ENCODE measurements at regions of chr10 and their contacts with region 1.

Region 1: GRCh38 chr10:15439341-15439842 is 68.3 kb upstream of the FAM171A1 start:
- DNase-seq: peak; percentile 79 to 87
- ATAC-seq: peak; percentile 78
- H3K4me3 ChIP-seq: no peak overlapping the region
- H3K27ac ChIP-seq: peak overlapping the region; percentile 52 to 84
- H3K4me1 ChIP-seq: peaks cover 0 to 2% of the 10 kb centered on the region in 2 donors
- H3K27me3 ChIP-seq: no peaks in the 10 kb centered on the region

Region 2: GRCh38 chr10:15504101-15504840 is 64.9 kb after region 1 on chr10:
- intact Hi-C with region 1: no loop called
- DNase-seq: no peak
- ATAC-seq: peak; percentile 31
- H3K4me3 ChIP-seq: peak overlapping the region in 1 of 2 donors; percentile 24
- H3K27ac ChIP-seq: no peak overlapping the region
- H3K4me1 ChIP-seq: peaks cover 0 to 2% of the 10 kb centered on the region in 2 donors
- H3K27me3 ChIP-seq: no peaks in the 10 kb centered on the region

Region 3: DNA sequence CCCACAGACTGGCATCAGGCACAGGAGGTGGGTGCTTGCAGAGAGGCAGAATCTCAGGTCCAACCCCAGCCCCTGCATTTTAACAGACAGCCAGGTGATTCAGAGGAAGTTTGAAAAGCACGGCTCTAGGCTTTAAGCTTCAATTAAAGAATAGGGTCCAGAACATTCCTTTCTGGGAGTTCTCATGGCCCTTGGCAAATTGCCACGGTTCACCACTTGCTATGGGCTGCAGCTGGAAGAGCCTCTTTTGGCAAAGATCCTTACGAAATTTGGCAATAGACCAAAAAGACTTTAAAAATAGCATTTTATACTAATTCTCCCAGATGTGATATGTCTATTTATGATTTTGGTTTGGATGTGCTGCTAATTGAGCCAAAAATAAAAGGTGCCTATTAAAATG is 132.2 kb after region 1 on chr10:
- intact Hi-C with region 1: loop called in 1 of 2 experiments (anchors 5 kb)
- DNase-seq: peak in 1 of 2 donors; percentile 71
- ATAC-seq: no peak
- H3K4me3 ChIP-seq: no peak overlapping the region
- H3K27ac ChIP-seq: peak overlapping the region; percentile 69 to 90
- H3K4me1 ChIP-seq: peaks cover 3 to 7% of the 10 kb centered on the region in 2 donors
- H3K27me3 ChIP-seq: no peaks in the 10 kb centered on the region

Region 4: DNA sequence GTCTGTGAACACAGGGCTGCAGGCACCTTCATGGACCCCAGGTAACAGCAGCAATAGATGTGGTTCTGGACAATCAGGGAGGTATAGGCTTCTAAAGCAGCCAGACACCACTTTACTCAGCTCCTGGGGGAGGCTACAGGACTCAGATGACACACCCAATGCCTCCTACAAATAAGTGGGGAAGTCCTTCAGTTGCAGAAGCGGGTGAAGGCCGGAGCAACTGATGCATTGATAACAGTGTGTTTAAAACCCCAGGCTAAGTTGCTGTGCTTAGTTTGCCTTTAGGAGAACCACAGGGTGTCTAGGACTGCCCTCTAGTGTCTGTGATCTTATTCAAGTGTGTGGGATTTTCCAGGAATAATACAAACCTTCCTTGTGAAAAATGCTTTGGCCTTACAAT is 286.2 kb after region 1 on chr10:
- intact Hi-C with region 1: no loop called
- DNase-seq: no peak
- ATAC-seq: peak; percentile 84
- H3K4me3 ChIP-seq: no peak overlapping the region
- H3K27ac ChIP-seq: peak overlapping the region; percentile 69 to 87
- H3K4me1 ChIP-seq: peaks cover 0 to 8% of the 10 kb centered on the region in 2 donors
- H3K27me3 ChIP-seq: no peaks in the 10 kb centered on the region